PC-9 (cell line): ENCODE measurements at regions of chr17 and their contacts with region 1.

Region 1: DNA sequence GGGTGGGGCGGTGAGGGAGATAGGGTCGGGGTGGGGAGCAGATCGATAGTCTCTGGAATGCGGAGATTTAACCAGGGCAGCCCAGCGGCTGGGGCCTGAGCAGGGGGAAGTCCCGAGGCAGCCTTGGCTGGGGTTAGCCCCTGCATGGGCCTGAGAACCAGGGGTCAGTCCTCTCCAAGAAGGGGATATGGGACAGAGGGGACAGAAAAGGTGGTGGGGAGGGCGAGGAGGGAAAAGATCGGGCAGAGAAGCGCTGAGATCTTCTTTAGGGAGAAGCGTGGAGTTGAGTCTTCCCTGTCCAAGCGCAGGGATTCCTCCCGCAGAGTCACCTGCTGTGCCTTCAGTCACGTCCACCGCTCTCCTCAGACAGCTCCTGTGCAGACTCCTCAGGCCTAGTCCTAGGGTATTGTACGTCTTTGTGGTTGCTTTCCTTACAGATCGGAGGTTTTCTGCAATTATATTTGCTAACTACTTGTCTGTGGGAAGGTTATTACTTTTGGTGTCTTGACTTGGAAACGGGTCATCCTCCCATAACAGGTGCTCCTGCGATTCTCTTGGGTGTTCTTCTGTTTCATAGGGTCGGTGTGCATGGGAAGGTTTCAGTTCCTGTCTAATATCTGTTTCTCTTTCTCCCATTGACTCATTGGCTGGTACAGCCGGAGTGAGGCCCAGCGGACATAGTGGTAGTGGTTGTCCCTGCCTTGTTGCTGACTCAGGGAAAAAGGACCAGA is 952 bp downstream of the CD300A start:
- DNase-seq: no peak
- H3K4me3 ChIP-seq: no peak overlapping the region
- H3K27ac ChIP-seq: no peak overlapping the region
- H3K4me1 ChIP-seq: no peaks in the 10 kb centered on the region
- H3K27me3 ChIP-seq: peaks cover 45% of the 10 kb centered on the region
- CTCF ChIP-seq: no peak

Region 2: GRCh38 chr17:74394977-74395376 is 72.4 kb before region 1 on chr17:
- CTCF ChIA-PET with region 1: interaction called, 12 read pairs
- POLR2A ChIA-PET with region 1: no interaction called
- intact Hi-C with region 1: no loop called
- DNase-seq: peak; percentile 68 to 77
- H3K4me3 ChIP-seq: no peak overlapping the region
- H3K27ac ChIP-seq: peak overlapping the region; percentile 14; the same call in 1 of the 2 replicates
- H3K4me1 ChIP-seq: peaks cover 12% of the 10 kb centered on the region
- H3K27me3 ChIP-seq: no peaks in the 10 kb centered on the region
- CTCF ChIP-seq: no peak